ENCODE measurements at regions of chr13 and their contacts with region 1.

Region 1: GRCh38 chr13:36282818-36283445 is 14.7 kb downstream of the CCDC169 start:
- DNase-seq: peak; percentile 71
- H3K4me3 ChIP-seq: no peak overlapping the region
- H3K27ac ChIP-seq: no peak overlapping the region
- H3K4me1 ChIP-seq: peaks cover 15% of the 10 kb centered on the region
- H3K27me3 ChIP-seq: no peaks in the 10 kb centered on the region
- CTCF ChIP-seq: peak; percentile 86

Region 2: GRCh38 chr13:36395280-36395679 is 112.3 kb after region 1 on chr13:
- CTCF ChIA-PET with region 1: interaction called, 9 read pairs
- POLR2A ChIA-PET with region 1: no interaction called
- intact Hi-C with region 1: loop called (anchors 5 kb)
- DNase-seq: peak; percentile 71
- H3K4me3 ChIP-seq: no peak overlapping the region
- H3K27ac ChIP-seq: no peak overlapping the region
- H3K4me1 ChIP-seq: no peaks in the 10 kb centered on the region
- H3K27me3 ChIP-seq: no peaks in the 10 kb centered on the region
- CTCF ChIP-seq: peak; percentile 71

Region 3: GRCh38 chr13:36841391-36841790 is 558.5 kb after region 1 on chr13:
- CTCF ChIA-PET with region 1: interaction called, 10 read pairs
- POLR2A ChIA-PET with region 1: no interaction called
- intact Hi-C with region 1: loop called (anchors 5 kb)
- DNase-seq: peak; percentile 85
- H3K4me3 ChIP-seq: no peak overlapping the region
- H3K27ac ChIP-seq: peak overlapping the region; percentile 82
- H3K4me1 ChIP-seq: peaks cover 61% of the 10 kb centered on the region
- H3K27me3 ChIP-seq: no peaks in the 10 kb centered on the region
- CTCF ChIP-seq: peak; percentile 48

Region 4: GRCh38 chr13:36981156-36981743 is 698.3 kb after region 1 on chr13:
- CTCF ChIA-PET with region 1: interaction called, 6 read pairs
- POLR2A ChIA-PET with region 1: no interaction called
- intact Hi-C with region 1: loop called (anchors 2 kb)
- DNase-seq: peak; percentile 81
- H3K4me3 ChIP-seq: no peak overlapping the region
- H3K27ac ChIP-seq: peak overlapping the region; percentile 69
- H3K4me1 ChIP-seq: peaks cover 17% of the 10 kb centered on the region
- H3K27me3 ChIP-seq: no peaks in the 10 kb centered on the region
- CTCF ChIP-seq: peak; percentile 69

Region 5: GRCh38 chr13:37068962-37069361 is 786.0 kb after region 1 on chr13:
- CTCF ChIA-PET with region 1: no interaction called
- POLR2A ChIA-PET with region 1: no interaction called
- intact Hi-C with region 1: loop called (anchors 2 kb)
- DNase-seq: peak; percentile 50
- H3K4me3 ChIP-seq: no peak overlapping the region
- H3K27ac ChIP-seq: no peak overlapping the region
- H3K4me1 ChIP-seq: no peaks in the 10 kb centered on the region
- H3K27me3 ChIP-seq: no peaks in the 10 kb centered on the region
- CTCF ChIP-seq: peak; percentile 70

Region 6: GRCh38 chr13:37602747-37603381 is 1319.9 kb after region 1 on chr13:
- CTCF ChIA-PET with region 1: no interaction called
- POLR2A ChIA-PET with region 1: no interaction called
- intact Hi-C with region 1: loop called (anchors 10 kb)
- DNase-seq: peak; percentile 53
- H3K4me3 ChIP-seq: no peak overlapping the region
- H3K27ac ChIP-seq: no peak overlapping the region
- H3K4me1 ChIP-seq: no peaks in the 10 kb centered on the region
- H3K27me3 ChIP-seq: no peaks in the 10 kb centered on the region
- CTCF ChIP-seq: peak; percentile 77